AG04449 (cell line): ENCODE measurements at regions of chr14 and their contacts with region 1.

Region 1: GRCh38 chr14:24431569-24432258 is 2.0 kb downstream of the KHNYN start:
- DNase-seq: peak; percentile 55
- H3K4me3 ChIP-seq: peak overlapping the region; percentile 88
- CTCF ChIP-seq: peak; percentile 95

Region 2: DNA sequence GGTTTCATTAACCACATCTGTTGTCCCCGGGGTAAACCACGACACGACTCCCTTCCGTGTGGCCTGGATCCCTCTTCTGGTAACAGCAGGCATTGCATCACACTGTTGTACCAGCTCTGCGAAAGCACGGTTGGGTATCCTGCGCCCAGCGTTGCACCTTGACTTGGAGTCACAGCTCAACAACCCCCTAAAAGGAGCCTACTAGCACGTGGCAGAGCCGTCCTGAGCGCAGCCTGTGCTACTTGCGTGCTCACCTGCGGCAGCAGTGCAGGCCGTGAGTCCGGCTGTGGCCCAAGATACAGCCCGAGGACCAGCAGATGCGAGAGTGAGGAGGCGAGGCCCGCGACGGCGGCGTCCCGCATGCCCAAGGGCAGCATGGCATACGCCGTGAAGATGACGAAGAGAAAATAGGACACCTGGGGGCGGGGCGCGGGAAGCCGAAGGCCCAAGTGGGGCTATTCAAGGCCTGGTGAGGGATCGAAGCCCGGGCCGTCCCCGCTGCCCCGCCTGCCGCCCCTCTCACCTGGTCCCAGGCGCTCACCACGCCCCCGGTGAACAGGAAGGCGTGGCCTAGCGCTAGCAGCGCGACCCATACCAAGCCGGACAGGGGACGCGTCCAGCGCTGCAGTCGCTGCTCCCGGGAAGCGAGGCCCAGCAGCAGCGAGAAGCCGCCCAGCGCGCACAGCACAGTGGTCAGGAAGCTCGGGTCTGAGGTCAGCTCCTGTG is 99.3 kb before region 1 on chr14:
- CTCF ChIA-PET with region 1: interaction called, 1,633 read pairs
- POLR2A ChIA-PET with region 1: interaction called, 23 read pairs
- DNase-seq: no peak
- H3K4me3 ChIP-seq: no peak overlapping the region; the same call in 1 of the 2 replicates
- CTCF ChIP-seq: peak; percentile 77

Region 3: GRCh38 chr14:24351517-24351916 is 80.2 kb before region 1 on chr14:
- CTCF ChIA-PET with region 1: interaction called, 44 read pairs
- POLR2A ChIA-PET with region 1: no interaction called
- DNase-seq: no peak
- H3K4me3 ChIP-seq: no peak overlapping the region
- CTCF ChIP-seq: no peak

Region 4: DNA sequence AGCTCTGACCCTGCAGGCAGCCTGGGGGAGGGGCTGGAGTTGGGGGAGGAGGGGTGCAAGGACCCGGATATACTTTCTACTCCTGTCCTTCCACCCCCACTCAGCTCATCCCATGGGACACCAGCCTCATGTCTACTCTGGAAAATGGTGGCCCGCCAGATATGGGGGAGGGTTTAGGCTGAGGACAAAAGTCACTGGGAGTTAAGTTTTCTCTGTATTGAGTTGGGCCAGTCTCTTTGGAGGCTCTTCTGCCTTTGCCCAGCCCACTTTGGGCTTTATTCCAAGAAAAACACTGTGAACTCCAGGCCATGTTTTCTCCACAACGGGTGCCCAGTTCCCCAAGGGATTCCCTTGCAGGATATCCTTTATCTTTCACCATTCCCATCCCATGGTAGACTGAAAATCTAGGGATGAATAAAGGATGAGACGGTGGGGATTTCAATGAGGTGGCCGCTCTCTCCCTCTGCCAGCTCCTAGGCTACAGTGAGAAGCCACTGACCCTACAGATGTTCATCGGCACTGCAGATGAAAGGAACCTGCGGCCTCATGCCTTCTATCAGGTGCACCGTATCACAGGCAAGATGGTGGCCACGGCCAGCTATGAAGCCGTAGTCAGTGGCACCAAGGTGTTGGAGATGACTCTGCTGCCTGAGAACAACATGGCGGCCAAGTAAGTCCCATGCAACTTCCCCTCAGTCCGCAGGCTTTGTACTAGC is 58.9 kb before region 1 on chr14:
- CTCF ChIA-PET with region 1: interaction called, 37 read pairs
- POLR2A ChIA-PET with region 1: interaction called, 5 read pairs
- DNase-seq: no peak
- H3K4me3 ChIP-seq: no peak overlapping the region
- CTCF ChIP-seq: no peak

Region 5: GRCh38 chr14:24398653-24399446 is 32.9 kb before region 1 on chr14 and contains the start of gene NYNRIN:
- CTCF ChIA-PET with region 1: interaction called, 557 read pairs
- POLR2A ChIA-PET with region 1: interaction called, 4 read pairs
- DNase-seq: no peak
- H3K4me3 ChIP-seq: peak within 1 kb of the TSS; percentile 69
- CTCF ChIP-seq: no peak

Region 6: GRCh38 chr14:24442273-24443052 is 10.7 kb after region 1 on chr14 and contains the start of gene SDR39U1:
- CTCF ChIA-PET with region 1: interaction called, 73 read pairs
- POLR2A ChIA-PET with region 1: interaction called, 25 read pairs
- DNase-seq: peak; percentile 92
- H3K4me3 ChIP-seq: peak within 1 kb of the TSS; percentile 98
- CTCF ChIP-seq: no peak

Region 7: DNA sequence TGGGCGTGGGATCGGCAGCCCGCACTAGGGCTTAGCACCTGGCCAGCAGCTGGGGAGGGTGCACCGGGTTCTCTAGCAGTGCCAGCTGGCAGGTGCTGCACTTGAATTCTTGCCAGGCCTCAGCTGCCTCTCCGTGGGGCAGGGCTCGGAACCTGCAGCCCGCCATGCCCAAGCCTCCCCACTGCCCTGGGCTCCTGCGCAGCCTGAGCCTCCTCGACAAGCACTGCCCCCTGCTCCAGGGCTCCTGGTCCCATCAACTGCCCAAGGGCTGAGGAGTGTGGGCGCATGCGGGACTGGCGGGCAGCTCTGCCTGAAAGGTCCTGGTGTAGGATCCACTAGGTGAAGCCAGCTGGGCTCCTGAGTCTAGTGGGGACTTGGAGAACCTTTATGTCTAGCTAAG is 41.5 kb after region 1 on chr14:
- CTCF ChIA-PET with region 1: no interaction called
- POLR2A ChIA-PET with region 1: no interaction called
- DNase-seq: no peak
- H3K4me3 ChIP-seq: no peak overlapping the region
- CTCF ChIP-seq: no peak